Activated CD4-positive, alpha-beta T cell treated with anti-CD3 and anti-CD28 coated beads for 36 hours (primary cell): ENCODE measurements at regions of chr6 and their contacts with region 1.

Region 1: DNA sequence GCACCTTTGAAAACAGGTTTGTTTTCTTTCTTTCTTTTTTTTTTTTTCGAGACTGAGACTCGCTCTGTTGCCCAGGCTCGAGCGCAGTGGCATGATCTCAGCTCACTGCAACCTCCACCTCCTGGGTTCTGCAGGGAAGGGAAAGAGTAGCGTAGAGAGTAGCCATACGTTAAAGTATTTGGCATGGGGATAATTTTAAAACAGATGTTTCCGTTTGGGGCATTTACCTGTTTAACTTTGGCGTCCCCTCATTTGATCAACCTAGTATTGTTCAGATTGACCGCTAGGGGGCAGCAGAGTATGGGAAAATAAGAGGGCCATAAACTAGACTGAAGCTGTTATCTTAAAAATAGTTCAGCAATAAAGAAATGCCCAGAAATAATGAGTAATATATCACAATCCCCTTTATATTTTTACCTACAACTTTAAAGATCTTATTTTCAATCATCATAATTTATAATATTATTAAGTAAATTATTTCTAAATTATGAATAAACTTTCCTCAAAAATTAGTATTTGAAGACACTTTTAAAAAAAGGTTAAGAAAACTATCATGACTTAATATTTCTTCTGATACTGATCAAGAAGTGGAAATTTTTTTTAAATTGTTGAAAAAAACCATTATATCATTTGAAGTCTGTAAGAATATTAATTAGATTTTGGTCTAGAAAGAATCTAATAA is 7.6 kb upstream of the TAAR9 start:
- DNase-seq: peak; percentile 82
- ATAC-seq: peak; percentile 57
- H3K4me3 Mint-ChIP-seq: no peak overlapping the region
- H3K27ac Mint-ChIP-seq: no peak overlapping the region
- H3K4me1 Mint-ChIP-seq: no peaks in the 10 kb centered on the region
- H3K27me3 Mint-ChIP-seq: peaks cover 6% of the 10 kb centered on the region

Region 2: DNA sequence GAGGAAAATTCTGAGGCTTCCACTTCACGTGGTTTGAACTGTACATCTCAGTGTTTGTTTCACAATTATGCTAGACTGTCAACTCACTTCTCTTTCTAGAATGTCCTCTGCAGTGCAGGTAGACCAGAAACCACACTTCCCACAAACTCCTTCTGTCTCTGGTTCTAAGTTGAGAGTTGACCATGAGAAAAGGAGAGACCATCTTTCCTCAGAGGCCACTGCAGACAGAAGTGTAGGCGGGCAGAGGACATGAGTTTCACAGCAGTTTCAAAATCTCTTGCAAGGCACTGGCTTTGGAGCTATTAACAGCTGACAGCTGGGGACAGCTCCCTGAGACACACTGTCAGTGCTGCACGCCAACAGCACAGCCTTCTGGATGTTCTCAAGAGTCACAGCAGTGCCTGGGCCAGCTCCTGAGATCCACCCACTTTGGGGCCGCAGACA is 73.7 kb before region 1 on chr6:
- CTCF ChIA-PET with region 1: no interaction called
- POLR2A ChIA-PET with region 1: no interaction called
- intact Hi-C with region 1: no loop called
- DNase-seq: no peak
- ATAC-seq: no peak
- H3K4me3 Mint-ChIP-seq: no peak overlapping the region
- H3K27ac Mint-ChIP-seq: no peak overlapping the region
- H3K4me1 Mint-ChIP-seq: no peaks in the 10 kb centered on the region
- H3K27me3 Mint-ChIP-seq: no peaks in the 10 kb centered on the region

Region 3: GRCh38 chr6:132466972-132467371 is 63.5 kb before region 1 on chr6:
- CTCF ChIA-PET with region 1: no interaction called
- POLR2A ChIA-PET with region 1: no interaction called
- intact Hi-C with region 1: no loop called
- DNase-seq: no peak
- ATAC-seq: no peak
- H3K4me3 Mint-ChIP-seq: no peak overlapping the region
- H3K27ac Mint-ChIP-seq: no peak overlapping the region
- H3K4me1 Mint-ChIP-seq: no peaks in the 10 kb centered on the region
- H3K27me3 Mint-ChIP-seq: no peaks in the 10 kb centered on the region

Region 4: GRCh38 chr6:132661906-132662305 is 131.5 kb after region 1 on chr6:
- CTCF ChIA-PET with region 1: no interaction called
- POLR2A ChIA-PET with region 1: no interaction called
- intact Hi-C with region 1: loop called (anchors 5 to 10 kb)
- DNase-seq: no peak
- ATAC-seq: no peak
- H3K4me3 Mint-ChIP-seq: no peak overlapping the region
- H3K27ac Mint-ChIP-seq: no peak overlapping the region
- H3K4me1 Mint-ChIP-seq: peaks cover 2% of the 10 kb centered on the region
- H3K27me3 Mint-ChIP-seq: no peaks in the 10 kb centered on the region

Region 5: DNA sequence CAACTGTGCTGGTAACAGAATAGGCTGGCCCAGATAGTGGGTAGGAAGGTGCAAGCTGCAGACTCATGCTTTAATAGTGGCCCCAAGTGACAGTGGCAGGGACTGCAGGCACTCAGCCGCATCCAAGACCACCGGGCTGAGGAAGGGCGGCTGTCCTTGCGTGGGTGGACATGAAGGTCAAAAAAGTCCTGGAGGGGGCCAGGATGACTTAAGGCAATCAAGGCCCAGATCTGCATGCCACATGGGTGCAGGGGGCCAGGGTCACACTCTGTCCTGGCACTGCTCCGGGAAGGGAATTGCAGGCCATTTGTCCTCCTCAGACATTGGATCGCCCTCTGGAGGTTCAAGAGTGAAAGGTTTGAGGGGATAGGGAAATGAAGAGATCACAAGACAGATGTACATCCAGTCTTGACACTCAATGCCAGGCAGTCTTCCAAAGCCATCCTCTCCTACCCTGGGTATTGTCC is 237.7 kb after region 1 on chr6:
- CTCF ChIA-PET with region 1: interaction called, 3 read pairs
- POLR2A ChIA-PET with region 1: no interaction called
- intact Hi-C with region 1: loop called in 1 of 2 experiments (anchors 1 kb)
- DNase-seq: peak; percentile 54
- ATAC-seq: peak; percentile 67
- H3K4me3 Mint-ChIP-seq: no peak overlapping the region
- H3K27ac Mint-ChIP-seq: no peak overlapping the region
- H3K4me1 Mint-ChIP-seq: peaks cover 20% of the 10 kb centered on the region
- H3K27me3 Mint-ChIP-seq: no peaks in the 10 kb centered on the region

Region 6: GRCh38 chr6:132813173-132813856 is 282.9 kb after region 1 on chr6:
- CTCF ChIA-PET with region 1: no interaction called
- POLR2A ChIA-PET with region 1: no interaction called
- intact Hi-C with region 1: loop called in 1 of 2 experiments (anchors 5 kb)
- DNase-seq: peak; percentile 64
- ATAC-seq: peak; percentile 23
- H3K4me3 Mint-ChIP-seq: peak overlapping the region; percentile 89
- H3K27ac Mint-ChIP-seq: peak overlapping the region; percentile 99
- H3K4me1 Mint-ChIP-seq: peaks cover 30% of the 10 kb centered on the region
- H3K27me3 Mint-ChIP-seq: no peaks in the 10 kb centered on the region

Region 7: GRCh38 chr6:132962936-132963868 is 432.8 kb after region 1 on chr6:
- CTCF ChIA-PET with region 1: no interaction called
- POLR2A ChIA-PET with region 1: no interaction called
- intact Hi-C with region 1: loop called in 1 of 2 experiments (anchors 1 kb)
- DNase-seq: peak; percentile 81
- ATAC-seq: peak; percentile 83
- H3K4me3 Mint-ChIP-seq: no peak overlapping the region
- H3K27ac Mint-ChIP-seq: no peak overlapping the region
- H3K4me1 Mint-ChIP-seq: peaks cover 2% of the 10 kb centered on the region
- H3K27me3 Mint-ChIP-seq: peaks cover 23% of the 10 kb centered on the region

Region 8: DNA sequence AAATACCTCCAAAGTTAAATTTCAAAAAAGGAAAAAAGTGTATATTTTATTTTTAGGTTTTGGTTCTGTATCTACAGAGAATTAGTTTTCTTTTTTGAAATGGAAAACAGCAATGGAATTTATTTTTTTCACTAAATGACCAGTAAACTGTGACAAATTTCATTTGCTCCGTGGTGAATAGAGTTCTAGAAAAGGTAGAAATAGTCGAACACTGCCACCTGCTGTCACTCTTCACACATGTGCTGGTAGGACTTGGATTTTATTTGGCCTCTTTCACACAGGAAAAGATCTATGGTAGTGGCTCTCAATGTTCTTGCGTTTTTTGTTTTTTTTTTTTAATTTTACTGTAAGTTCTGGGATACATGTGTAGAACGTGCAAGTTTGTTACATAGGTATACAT is 1023.2 kb after region 1 on chr6:
- CTCF ChIA-PET with region 1: no interaction called
- POLR2A ChIA-PET with region 1: no interaction called
- intact Hi-C with region 1: loop called in 1 of 2 experiments (anchors 5 kb)
- DNase-seq: peak; percentile 57
- ATAC-seq: no peak
- H3K4me3 Mint-ChIP-seq: no peak overlapping the region
- H3K27ac Mint-ChIP-seq: no peak overlapping the region
- H3K4me1 Mint-ChIP-seq: no peaks in the 10 kb centered on the region
- H3K27me3 Mint-ChIP-seq: peaks cover 7% of the 10 kb centered on the region

Region 9: GRCh38 chr6:133587546-133588160 is 1057.2 kb after region 1 on chr6:
- CTCF ChIA-PET with region 1: no interaction called
- POLR2A ChIA-PET with region 1: no interaction called
- intact Hi-C with region 1: no loop called
- DNase-seq: no peak
- ATAC-seq: no peak
- H3K4me3 Mint-ChIP-seq: no peak overlapping the region
- H3K27ac Mint-ChIP-seq: no peak overlapping the region
- H3K4me1 Mint-ChIP-seq: no peaks in the 10 kb centered on the region
- H3K27me3 Mint-ChIP-seq: peaks cover 3% of the 10 kb centered on the region